Activated CD8-positive, alpha-beta T cell treated with anti-CD3 and anti-CD28 coated beads for 36 hours (primary cell): ENCODE measurements at regions of chr9 and their contacts with region 1.

Region 1: GRCh38 chr9:83622939-83623678 is at the start of gene IDNK:
- DNase-seq: peak; percentile 64
- ATAC-seq: peak; percentile 87
- H3K4me3 Mint-ChIP-seq: peak within 1 kb of the TSS; percentile 82
- H3K27ac Mint-ChIP-seq: peak within 1 kb of the TSS; percentile 94
- H3K4me1 Mint-ChIP-seq: peaks cover 23% of the 10 kb centered on the region
- H3K27me3 Mint-ChIP-seq: no peaks in the 10 kb centered on the region
- CTCF ChIP-seq: no peak
- total RNA-seq, gene IDNK: 3.6 to 4.8 TPM

Region 2: DNA sequence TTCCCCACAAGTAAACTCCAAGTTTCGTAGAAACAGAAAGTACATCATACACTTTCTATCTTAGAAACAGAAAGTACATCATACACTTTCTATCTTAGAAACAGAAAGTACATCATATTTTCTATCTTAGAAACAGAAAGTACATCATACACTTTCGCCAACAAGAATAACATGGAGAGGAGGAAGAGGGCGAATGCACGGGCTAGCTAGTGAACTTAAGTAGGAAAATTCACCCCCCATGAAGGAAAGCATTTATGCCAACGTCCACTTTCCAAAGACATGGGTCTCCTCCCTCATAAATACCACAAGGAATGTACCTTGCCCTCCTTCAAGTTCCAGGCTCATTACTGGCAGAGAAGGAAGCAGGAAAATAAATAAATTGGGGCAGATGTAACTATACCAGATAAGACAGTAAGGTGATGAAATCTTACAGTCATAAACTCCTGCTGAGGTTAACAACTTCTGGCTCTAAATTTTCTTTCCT is 149.6 kb before region 1 on chr9:
- CTCF ChIA-PET with region 1: no interaction called
- POLR2A ChIA-PET with region 1: no interaction called
- intact Hi-C with region 1: no loop called
- DNase-seq: peak; percentile 12
- ATAC-seq: peak; percentile 95
- H3K4me3 Mint-ChIP-seq: peak overlapping the region; percentile 49
- H3K27ac Mint-ChIP-seq: peak overlapping the region; percentile 67
- H3K4me1 Mint-ChIP-seq: peaks cover 22% of the 10 kb centered on the region
- H3K27me3 Mint-ChIP-seq: no peaks in the 10 kb centered on the region
- CTCF ChIP-seq: no peak

Region 3: DNA sequence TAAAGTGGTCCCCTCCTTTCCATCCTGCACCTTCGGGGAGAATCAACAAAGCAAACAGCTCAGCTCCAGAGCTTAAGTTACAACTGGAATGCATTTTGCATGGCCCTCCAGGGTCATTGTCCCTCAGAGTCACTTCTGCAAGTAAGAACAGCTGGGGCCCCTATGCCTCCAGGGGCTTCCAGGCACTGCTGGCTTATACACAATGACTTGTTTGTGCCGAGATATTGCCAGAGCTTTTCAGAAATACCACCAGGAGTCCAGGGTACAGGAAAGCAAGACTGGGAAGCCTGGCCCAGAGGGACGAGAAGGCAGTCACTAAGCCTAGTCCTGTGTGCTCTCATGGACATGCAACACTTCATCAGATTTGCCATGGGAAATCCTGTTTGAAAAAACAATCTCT is 96.2 kb before region 1 on chr9:
- CTCF ChIA-PET with region 1: no interaction called
- POLR2A ChIA-PET with region 1: no interaction called
- intact Hi-C with region 1: no loop called
- DNase-seq: no peak
- ATAC-seq: no peak
- H3K4me3 Mint-ChIP-seq: no peak overlapping the region
- H3K27ac Mint-ChIP-seq: no peak overlapping the region
- H3K4me1 Mint-ChIP-seq: no peaks in the 10 kb centered on the region
- H3K27me3 Mint-ChIP-seq: no peaks in the 10 kb centered on the region
- CTCF ChIP-seq: no peak

Region 4: DNA sequence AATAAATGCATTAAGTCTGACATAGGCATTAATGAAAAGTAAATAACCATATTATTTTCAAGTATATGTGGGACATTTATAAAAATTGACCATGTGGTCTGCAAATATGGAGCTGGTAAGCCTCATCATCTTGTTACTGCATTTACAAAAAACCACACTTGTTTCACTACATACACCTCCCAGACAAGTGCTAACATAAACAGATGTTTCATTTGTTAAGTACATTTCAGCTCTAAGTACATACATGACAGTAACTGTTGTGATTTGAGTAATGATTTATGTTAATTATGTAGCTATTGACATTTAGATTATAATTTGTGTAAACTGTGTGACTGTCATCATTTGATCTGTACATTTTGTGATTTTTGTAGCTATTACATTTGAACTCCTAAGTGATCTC is 13.7 kb after region 1 on chr9:
- CTCF ChIA-PET with region 1: interaction called, 12 read pairs
- POLR2A ChIA-PET with region 1: interaction called, 5 read pairs
- intact Hi-C with region 1: no loop called
- DNase-seq: no peak
- ATAC-seq: no peak
- H3K4me3 Mint-ChIP-seq: no peak overlapping the region
- H3K27ac Mint-ChIP-seq: no peak overlapping the region
- H3K4me1 Mint-ChIP-seq: no peaks in the 10 kb centered on the region
- H3K27me3 Mint-ChIP-seq: no peaks in the 10 kb centered on the region
- CTCF ChIP-seq: no peak

Region 5: GRCh38 chr9:83649080-83649479 is 26.0 kb after region 1 on chr9:
- CTCF ChIA-PET with region 1: interaction called, 24 read pairs
- POLR2A ChIA-PET with region 1: interaction called, 6 read pairs
- intact Hi-C with region 1: no loop called
- DNase-seq: peak; percentile 80
- ATAC-seq: peak; percentile 88
- H3K4me3 Mint-ChIP-seq: no peak overlapping the region
- H3K27ac Mint-ChIP-seq: no peak overlapping the region
- H3K4me1 Mint-ChIP-seq: no peaks in the 10 kb centered on the region
- H3K27me3 Mint-ChIP-seq: no peaks in the 10 kb centered on the region
- CTCF ChIP-seq: peak; percentile 61

Region 6: DNA sequence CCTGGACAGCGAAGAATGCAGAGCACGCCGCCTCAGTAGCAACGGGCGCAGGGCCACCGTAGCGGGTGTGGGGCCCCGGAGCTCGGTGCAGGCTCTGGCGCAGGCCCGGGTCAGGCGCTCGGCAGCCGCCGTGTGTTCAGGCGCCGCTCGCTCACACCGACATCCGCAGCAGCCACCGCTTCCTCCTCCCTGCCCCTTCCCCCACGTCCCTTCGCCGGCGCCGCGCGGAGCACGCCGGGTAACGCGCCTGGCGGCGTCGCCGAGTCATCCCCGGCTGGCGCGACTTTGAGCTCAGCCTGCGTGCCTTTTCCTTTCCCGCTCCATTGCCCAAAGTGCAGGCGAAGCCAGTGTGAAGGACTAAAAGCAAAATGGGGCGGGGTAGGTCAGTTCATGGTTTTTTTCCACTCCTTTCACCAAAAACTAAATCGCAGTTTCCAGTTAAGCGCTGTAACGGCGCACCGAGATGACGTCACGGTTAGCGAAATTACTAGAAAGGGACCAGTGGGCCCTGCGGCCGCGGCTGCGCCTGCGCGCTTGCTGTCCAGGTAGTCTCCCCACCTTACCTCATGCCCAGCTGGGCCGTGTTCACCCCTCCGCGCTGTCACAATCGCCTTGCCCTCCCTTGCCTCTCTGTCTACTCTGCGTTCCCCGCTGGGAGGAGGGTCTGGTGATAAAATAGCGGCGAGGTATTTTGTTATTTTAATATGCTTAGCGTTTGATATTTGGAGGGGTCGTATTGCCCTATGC is 84.8 kb after region 1 on chr9 and contains the start of gene UBQLN1:
- CTCF ChIA-PET with region 1: interaction called, 11 read pairs
- POLR2A ChIA-PET with region 1: interaction called, 20 read pairs
- intact Hi-C with region 1: loop called (anchors 5 kb)
- DNase-seq: peak; percentile 96
- ATAC-seq: peak; percentile 78
- H3K4me3 Mint-ChIP-seq: peak within 1 kb of the TSS; percentile 86
- H3K27ac Mint-ChIP-seq: peak within 1 kb of the TSS; percentile 98
- H3K4me1 Mint-ChIP-seq: peaks cover 34% of the 10 kb centered on the region
- H3K27me3 Mint-ChIP-seq: no peaks in the 10 kb centered on the region
- CTCF ChIP-seq: no peak
- total RNA-seq, gene UBQLN1: 80.1 to 92.9 TPM

Region 7: GRCh38 chr9:83920927-83921707 is 298.0 kb after region 1 on chr9 and contains the start of gene KIF27:
- CTCF ChIA-PET with region 1: no interaction called
- POLR2A ChIA-PET with region 1: interaction called, 6 read pairs
- intact Hi-C with region 1: loop called (anchors 5 kb)
- DNase-seq: peak; percentile 99
- ATAC-seq: peak; percentile 94
- H3K4me3 Mint-ChIP-seq: peak within 1 kb of the TSS; percentile 83
- H3K27ac Mint-ChIP-seq: peak within 1 kb of the TSS; percentile 90
- H3K4me1 Mint-ChIP-seq: peaks cover 17% of the 10 kb centered on the region
- H3K27me3 Mint-ChIP-seq: no peaks in the 10 kb centered on the region
- CTCF ChIP-seq: peak; percentile 55
- total RNA-seq, gene KIF27: 2.6 to 3.4 TPM